Calu3 (cell line): ENCODE measurements at regions of chr1 and their contacts with region 1.

Region 1: DNA sequence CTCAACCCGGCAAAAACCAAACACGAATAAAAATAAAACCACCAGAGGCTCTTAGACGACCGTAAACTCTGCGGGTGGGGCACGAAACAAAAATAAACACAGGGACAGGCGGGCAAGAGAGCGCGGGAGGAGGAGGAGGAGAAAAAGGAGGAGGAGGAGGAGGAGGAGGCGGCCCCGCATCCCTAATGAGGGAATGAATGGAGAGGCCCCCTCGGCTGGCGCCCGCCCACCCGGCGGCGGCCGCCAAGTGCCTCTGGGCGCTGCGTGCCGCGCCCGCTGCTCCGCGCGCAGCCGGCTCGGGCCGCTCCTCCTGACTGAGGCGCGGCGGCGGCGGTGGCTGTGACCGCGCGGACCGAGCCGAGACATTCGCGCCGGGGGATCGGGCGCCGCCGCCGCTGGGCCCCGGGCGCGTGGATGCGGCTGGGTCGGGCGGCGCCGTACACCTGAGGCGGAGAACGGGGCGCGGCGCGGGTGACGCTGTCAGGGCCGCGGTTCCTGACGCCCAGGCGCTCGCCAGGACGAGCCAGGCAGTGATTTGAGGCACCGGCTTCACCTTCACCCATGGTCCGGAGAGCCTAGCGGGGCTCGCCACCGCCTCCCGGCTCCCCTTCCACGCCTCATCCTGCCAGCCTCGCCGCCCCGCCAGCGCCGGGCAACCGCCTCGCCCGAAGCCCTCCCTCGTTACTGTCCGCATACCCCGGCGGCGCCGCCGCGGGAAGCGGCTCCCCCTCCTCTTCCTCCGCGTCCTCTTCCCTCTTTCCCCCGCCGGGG is at the start of gene MARK1:
- DNase-seq: peak; percentile 56
- H3K4me3 Mint-ChIP-seq: peak within 1 kb of the TSS; percentile 78
- H3K27ac Mint-ChIP-seq: peak within 1 kb of the TSS; percentile 60
- H3K4me1 Mint-ChIP-seq: peaks cover 9% of the 10 kb centered on the region
- H3K27me3 Mint-ChIP-seq: peaks cover 70% of the 10 kb centered on the region
- CTCF ChIP-seq: no peak
- total RNA-seq, gene MARK1: 1.8 and 3.0 TPM in 2 replicates

Region 2: GRCh38 chr1:220370031-220370700 is 157.9 kb before region 1 on chr1:
- CTCF ChIA-PET with region 1: interaction called, 4 read pairs
- intact Hi-C with region 1: loop called (anchors 5 kb)
- DNase-seq: peak; percentile 48
- H3K4me3 Mint-ChIP-seq: no peak overlapping the region
- H3K27ac Mint-ChIP-seq: peak overlapping the region; percentile 31
- H3K4me1 Mint-ChIP-seq: peaks cover 43% of the 10 kb centered on the region
- H3K27me3 Mint-ChIP-seq: no peaks in the 10 kb centered on the region
- CTCF ChIP-seq: no peak